Gastrocnemius medialis (tissue), 4 donors: ENCODE measurements at regions of chr18 and their contacts with region 1.

Region 1: DNA sequence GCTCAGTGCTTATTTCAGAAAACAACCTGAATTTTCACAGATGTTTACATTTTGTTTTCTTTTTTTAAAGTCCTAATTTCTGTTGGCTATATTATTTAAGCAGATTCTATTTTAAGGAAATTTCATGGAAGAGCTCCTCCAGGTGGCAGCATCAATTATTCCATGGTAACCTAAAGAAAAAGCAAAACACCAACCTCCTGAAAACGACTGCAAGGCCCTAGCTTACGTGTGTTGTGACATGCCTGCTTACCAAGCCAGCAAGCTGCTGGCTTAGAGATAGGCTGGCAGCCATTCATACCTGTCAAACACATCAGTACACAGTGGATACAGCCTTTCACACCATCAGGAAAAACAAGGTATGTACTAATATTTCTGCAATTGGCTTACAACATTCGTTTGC is 64.9 kb downstream of the LPIN2 start:
- DNase-seq: no peak
- ATAC-seq: no peak
- H3K4me3 ChIP-seq: no peak overlapping the region
- H3K27ac ChIP-seq: no peak overlapping the region
- H3K4me1 ChIP-seq: no peaks in the 10 kb centered on the region
- H3K27me3 ChIP-seq: no peaks in the 10 kb centered on the region
- CTCF ChIP-seq: peak in 2 of 5 experiments; percentile 23 to 39
- POLR2A ChIP-seq: no peak

Region 2: GRCh38 chr18:3135536-3135935 is 187.5 kb after region 1 on chr18:
- in situ Hi-C with region 1: loop called in 3 of 4 experiments (anchors 10 to 25 kb)
- intact Hi-C with region 1: no loop called
- DNase-seq: no peak
- ATAC-seq: no peak
- H3K4me3 ChIP-seq: no peak overlapping the region
- H3K27ac ChIP-seq: peak overlapping the region in 3 of 4 donors; percentile 39 to 84 (median 65)
- H3K4me1 ChIP-seq: peaks cover 13 to 28% of the 10 kb centered on the region in 2 donors
- H3K27me3 ChIP-seq: no peaks in the 10 kb centered on the region
- CTCF ChIP-seq: no peak
- POLR2A ChIP-seq: no peak